Activated B cell treated with CpG ODN at 0.5 μM for 24 hours (primary cell): ENCODE measurements at regions of chr19 and their contacts with region 1.

Region 1: GRCh38 chr19:19618219-19619051 is at the start of gene PBX4:
- DNase-seq: peak; percentile 98
- ATAC-seq: peak; percentile 95
- H3K4me3 Mint-ChIP-seq: peak within 1 kb of the TSS; percentile 85
- H3K27ac Mint-ChIP-seq: peak within 1 kb of the TSS; percentile 83
- H3K4me1 Mint-ChIP-seq: peaks cover 35% of the 10 kb centered on the region
- H3K27me3 Mint-ChIP-seq: no peaks in the 10 kb centered on the region
- CTCF ChIP-seq: no peak
- total RNA-seq, gene PBX4: 19.4 and 21.8 TPM in 2 replicates

Region 2: DNA sequence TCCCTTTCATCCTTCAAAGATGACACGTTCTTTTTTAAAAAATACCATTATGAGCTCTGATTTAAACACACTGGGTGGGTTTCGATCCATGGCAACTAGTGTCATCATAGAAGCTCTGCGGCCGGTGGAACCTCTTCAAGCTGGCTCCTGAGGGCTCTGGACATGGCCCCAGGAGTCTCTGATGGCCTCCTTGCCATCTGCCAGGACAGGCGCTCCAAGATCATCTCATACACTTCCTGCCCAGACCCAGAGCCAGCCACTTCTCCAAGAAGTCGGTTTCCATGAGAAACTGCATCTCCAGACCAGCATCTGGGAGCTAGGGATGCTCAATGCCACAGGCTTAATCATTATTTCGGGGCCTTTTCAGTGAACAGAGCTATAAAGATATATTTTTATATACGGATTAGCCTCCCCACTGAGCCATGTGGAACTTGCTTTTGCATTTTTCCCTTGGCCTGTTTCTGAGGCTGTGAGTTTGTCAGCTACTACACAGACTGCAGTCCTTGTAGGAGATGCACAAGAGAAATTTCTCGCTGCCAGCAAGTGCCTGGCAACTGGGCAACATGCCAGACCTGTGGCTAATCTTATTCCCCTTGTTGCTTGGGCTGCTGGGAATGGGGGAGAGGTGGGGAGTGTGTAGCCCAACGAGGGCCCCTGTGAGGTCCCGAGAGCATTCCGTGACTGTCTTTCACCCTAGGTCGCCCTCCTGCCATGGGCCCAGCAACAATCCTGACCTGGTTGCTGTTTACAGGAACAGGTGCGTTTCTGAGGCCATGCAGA is 314.1 kb before region 1 on chr19:
- CTCF ChIA-PET with region 1: no interaction called
- POLR2A ChIA-PET with region 1: no interaction called
- intact Hi-C with region 1: no loop called
- DNase-seq: no peak
- ATAC-seq: no peak
- H3K4me3 Mint-ChIP-seq: no peak overlapping the region
- H3K27ac Mint-ChIP-seq: no peak overlapping the region
- H3K4me1 Mint-ChIP-seq: no peaks in the 10 kb centered on the region
- H3K27me3 Mint-ChIP-seq: no peaks in the 10 kb centered on the region
- CTCF ChIP-seq: no peak

Region 3: GRCh38 chr19:19385108-19385899 is 233.1 kb before region 1 on chr19:
- CTCF ChIA-PET with region 1: no interaction called
- POLR2A ChIA-PET with region 1: no interaction called
- intact Hi-C with region 1: loop called (anchors 10 kb)
- DNase-seq: peak; percentile 98
- ATAC-seq: peak; percentile 89
- H3K4me3 Mint-ChIP-seq: peak overlapping the region; percentile 87
- H3K27ac Mint-ChIP-seq: peak overlapping the region; percentile 83
- H3K4me1 Mint-ChIP-seq: peaks cover 43% of the 10 kb centered on the region
- H3K27me3 Mint-ChIP-seq: no peaks in the 10 kb centered on the region
- CTCF ChIP-seq: no peak

Region 4: GRCh38 chr19:19591133-19591825 is 27.2 kb before region 1 on chr19:
- CTCF ChIA-PET with region 1: no interaction called
- POLR2A ChIA-PET with region 1: interaction called, 5 read pairs
- intact Hi-C with region 1: loop called (anchors 1 kb)
- DNase-seq: no peak
- ATAC-seq: peak; percentile 91
- H3K4me3 Mint-ChIP-seq: peak overlapping the region; percentile 70
- H3K27ac Mint-ChIP-seq: peak overlapping the region; percentile 92
- H3K4me1 Mint-ChIP-seq: peaks cover 41% of the 10 kb centered on the region
- H3K27me3 Mint-ChIP-seq: no peaks in the 10 kb centered on the region
- CTCF ChIP-seq: no peak

Region 5: DNA sequence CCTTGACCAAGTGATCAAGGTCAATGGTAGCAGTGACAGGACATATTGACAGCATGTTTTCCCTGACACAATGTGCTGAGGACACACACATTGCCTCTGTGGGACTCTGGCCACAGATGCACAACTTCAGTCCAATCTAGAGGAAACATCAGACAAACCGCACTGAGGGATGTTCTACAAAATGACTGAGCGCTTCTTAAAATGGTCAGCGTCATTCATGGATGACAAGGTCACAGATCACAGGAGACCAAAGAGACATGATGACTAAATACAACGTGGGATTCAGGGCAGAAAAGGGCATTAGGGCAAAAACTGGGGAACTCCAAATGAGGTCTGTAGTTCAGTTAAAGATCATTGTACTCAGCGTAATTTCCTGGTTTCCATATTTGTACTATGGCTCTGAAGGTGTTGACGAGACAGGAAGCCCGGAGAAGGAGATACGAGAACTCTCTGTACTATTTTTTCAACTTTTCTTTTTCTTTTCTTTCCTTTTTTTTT is 20.6 kb before region 1 on chr19:
- CTCF ChIA-PET with region 1: no interaction called
- POLR2A ChIA-PET with region 1: interaction called, 6 read pairs
- intact Hi-C with region 1: loop called (anchors 1 kb)
- DNase-seq: no peak
- ATAC-seq: peak; percentile 80
- H3K4me3 Mint-ChIP-seq: peak overlapping the region; percentile 62
- H3K27ac Mint-ChIP-seq: peak overlapping the region; percentile 89
- H3K4me1 Mint-ChIP-seq: peaks cover 67% of the 10 kb centered on the region
- H3K27me3 Mint-ChIP-seq: no peaks in the 10 kb centered on the region
- CTCF ChIP-seq: no peak

Region 6: DNA sequence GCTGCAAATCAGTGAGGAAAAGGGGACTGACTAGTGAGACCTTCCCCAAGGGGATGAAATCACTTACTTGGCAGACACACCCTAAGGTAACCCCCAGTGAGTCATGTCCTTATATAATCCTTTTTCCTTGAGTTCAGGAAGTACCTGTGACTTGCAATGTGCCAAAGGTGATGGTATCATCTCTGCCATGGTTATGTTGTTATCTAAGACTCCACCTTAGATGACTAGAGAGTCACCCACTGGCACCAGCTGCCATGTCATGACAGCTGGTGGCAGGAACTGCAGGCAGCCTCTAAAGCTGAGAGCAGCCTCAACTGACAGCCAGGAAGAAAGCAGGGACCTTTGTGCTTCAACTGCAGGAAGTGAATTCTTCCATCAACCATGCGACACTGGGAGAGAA is 12.4 kb before region 1 on chr19:
- CTCF ChIA-PET with region 1: no interaction called
- POLR2A ChIA-PET with region 1: interaction called, 8 read pairs
- intact Hi-C with region 1: loop called (anchors 1 kb)
- DNase-seq: no peak
- ATAC-seq: peak; percentile 53
- H3K4me3 Mint-ChIP-seq: no peak overlapping the region
- H3K27ac Mint-ChIP-seq: peak overlapping the region; percentile 62
- H3K4me1 Mint-ChIP-seq: peaks cover 33% of the 10 kb centered on the region
- H3K27me3 Mint-ChIP-seq: no peaks in the 10 kb centered on the region
- CTCF ChIP-seq: no peak

Region 7: DNA sequence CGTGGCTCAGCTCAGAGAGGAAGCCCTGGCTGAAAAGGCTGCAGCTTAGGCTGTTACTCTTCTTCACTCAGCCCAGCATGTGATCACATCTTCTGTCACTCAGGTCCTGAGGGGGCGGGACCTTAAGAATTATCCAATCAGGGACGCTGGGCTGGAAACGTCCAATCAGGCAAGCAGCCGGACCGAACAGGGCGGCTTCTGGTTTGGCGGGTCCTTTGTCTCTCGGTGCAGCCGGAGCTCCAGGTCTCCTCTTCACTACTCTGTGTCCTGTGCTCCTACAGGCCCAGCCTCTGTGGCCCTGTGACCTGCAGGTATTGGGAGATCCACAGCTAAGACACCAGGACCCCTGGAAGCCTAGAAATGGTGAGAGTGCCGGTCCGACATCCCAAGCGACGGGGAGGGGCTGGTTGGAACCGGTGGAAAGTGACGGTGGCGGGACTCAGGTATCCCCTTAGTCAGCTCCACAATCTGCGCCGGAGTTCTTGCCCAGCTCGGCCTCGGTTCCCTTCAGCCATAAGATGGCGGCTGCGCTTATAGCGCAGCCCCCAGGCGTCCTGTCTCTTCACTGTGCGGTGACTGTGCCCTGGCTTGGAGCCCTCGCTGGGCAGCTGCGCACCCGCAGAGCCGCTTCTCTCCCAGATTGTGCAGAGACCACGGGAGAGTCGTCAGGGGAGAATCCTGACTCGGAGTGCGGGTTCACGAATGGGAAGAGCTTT is 282.5 kb after region 1 on chr19 and contains the start of gene ZNF93:
- CTCF ChIA-PET with region 1: no interaction called
- POLR2A ChIA-PET with region 1: interaction called, 3 read pairs
- intact Hi-C with region 1: loop called (anchors 2 kb)
- DNase-seq: peak; percentile 74
- ATAC-seq: peak; percentile 97
- H3K4me3 Mint-ChIP-seq: peak within 1 kb of the TSS; percentile 98
- H3K27ac Mint-ChIP-seq: peak within 1 kb of the TSS; percentile 91
- H3K4me1 Mint-ChIP-seq: peaks cover 34% of the 10 kb centered on the region
- H3K27me3 Mint-ChIP-seq: no peaks in the 10 kb centered on the region
- CTCF ChIP-seq: no peak
- total RNA-seq, gene ZNF93: 13.5 and 14.9 TPM in 2 replicates